ENCODE measurements at regions of chr3 and their contacts with region 1.

Region 1: GRCh38 chr3:114056130-114057010 is at the starts of genes CCDC191 and QTRT2:
- DNase-seq: peak; percentile 100
- H3K4me3 Mint-ChIP-seq: peak within 1 kb of the TSS; percentile 97
- H3K27ac Mint-ChIP-seq: peak within 1 kb of the TSS; percentile 95
- H3K4me1 Mint-ChIP-seq: peaks cover 36% of the 10 kb centered on the region
- H3K27me3 Mint-ChIP-seq: no peaks in the 10 kb centered on the region
- total RNA-seq, gene CCDC191: 1.8 to 2.0 TPM
- total RNA-seq, gene QTRT2: 23.0 to 27.8 TPM

Region 2: GRCh38 chr3:113514265-113514769 is 542.1 kb before region 1 on chr3:
- CTCF ChIA-PET with region 1: no interaction called
- intact Hi-C with region 1: loop called (anchors 1 kb)
- DNase-seq: no peak
- H3K4me3 Mint-ChIP-seq: no peak overlapping the region
- H3K27ac Mint-ChIP-seq: no peak overlapping the region
- H3K4me1 Mint-ChIP-seq: peaks cover 12% of the 10 kb centered on the region
- H3K27me3 Mint-ChIP-seq: peaks cover 12% of the 10 kb centered on the region

Region 3: DNA sequence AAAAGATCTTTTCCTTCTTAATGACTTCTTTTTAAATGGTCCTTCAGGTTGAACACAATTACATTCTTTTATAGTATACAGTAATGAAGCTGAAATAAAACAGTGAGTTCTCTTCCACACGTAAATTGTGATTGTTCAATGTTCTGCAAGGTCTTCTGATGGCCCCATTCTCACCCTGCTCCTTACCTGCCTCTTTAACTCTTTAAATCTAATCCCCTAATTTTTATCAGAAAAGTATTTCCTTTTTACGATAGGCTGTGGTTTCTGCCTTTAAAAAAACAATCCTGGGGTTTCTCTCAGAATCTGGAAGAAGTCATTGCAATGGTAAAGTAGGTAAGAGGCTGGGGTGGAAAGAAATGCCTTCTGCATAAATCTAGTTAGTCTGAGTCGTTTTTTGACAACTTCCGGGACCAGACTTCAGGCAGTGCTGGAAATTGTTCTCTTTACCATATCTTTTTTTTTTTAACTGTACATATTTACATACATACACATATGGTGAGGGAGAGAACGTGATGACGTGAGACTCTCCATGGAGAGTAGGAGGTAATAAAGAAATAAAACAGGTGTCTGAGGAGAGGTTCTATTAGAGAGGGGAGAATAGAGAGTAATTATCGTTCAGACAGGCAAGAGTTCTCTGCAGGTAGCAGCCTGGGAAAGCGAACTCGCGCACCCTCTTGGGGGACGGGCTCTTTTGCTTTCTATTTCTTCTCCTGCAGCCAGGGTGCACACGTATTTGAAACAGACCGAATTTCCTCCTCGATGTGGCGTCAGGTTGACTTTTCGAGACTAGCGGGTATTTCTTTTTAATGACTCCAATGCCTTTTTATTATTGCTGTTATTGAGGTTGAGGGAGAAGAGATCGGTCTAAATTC is 524.3 kb before region 1 on chr3 and contains the start of gene SIDT1:
- CTCF ChIA-PET with region 1: no interaction called
- intact Hi-C with region 1: loop called (anchors 5 kb)
- DNase-seq: peak; percentile 82
- H3K4me3 Mint-ChIP-seq: peak within 1 kb of the TSS; percentile 97
- H3K27ac Mint-ChIP-seq: peak within 1 kb of the TSS; percentile 96
- H3K4me1 Mint-ChIP-seq: peaks cover 46% of the 10 kb centered on the region
- H3K27me3 Mint-ChIP-seq: no peaks in the 10 kb centered on the region
- total RNA-seq, gene SIDT1: 14.6 to 14.9 TPM

Region 4: GRCh38 chr3:113838631-113839209 is 217.7 kb before region 1 on chr3 and contains the start of gene GRAMD1C:
- CTCF ChIA-PET with region 1: no interaction called
- intact Hi-C with region 1: loop called (anchors 1 kb)
- DNase-seq: peak; percentile 89
- H3K4me3 Mint-ChIP-seq: peak within 1 kb of the TSS; percentile 75
- H3K27ac Mint-ChIP-seq: no peak within 1 kb of the TSS
- H3K4me1 Mint-ChIP-seq: peaks cover 6% of the 10 kb centered on the region
- H3K27me3 Mint-ChIP-seq: no peaks in the 10 kb centered on the region
- total RNA-seq, gene GRAMD1C: 0.67 to 1.3 TPM

Region 5: DNA sequence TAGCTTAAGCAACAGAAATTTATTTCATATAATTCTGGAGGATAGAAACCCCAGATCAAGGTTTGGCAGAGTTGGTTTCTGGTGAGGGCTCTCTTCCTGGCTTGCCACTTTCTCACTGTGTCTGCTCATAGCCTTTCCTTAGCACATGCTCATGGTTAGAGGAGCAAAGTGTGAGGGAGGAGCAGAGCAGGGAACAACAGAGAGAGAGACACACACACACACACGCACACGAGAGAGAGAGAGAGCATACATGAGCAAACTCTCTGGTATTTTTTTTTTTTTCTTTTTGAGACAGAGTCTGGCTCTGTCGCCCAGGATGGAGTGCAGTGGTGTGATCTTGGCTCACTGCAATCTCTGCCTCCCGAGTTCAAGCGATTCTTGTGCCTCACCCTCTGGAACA is 145.4 kb before region 1 on chr3:
- CTCF ChIA-PET with region 1: no interaction called
- intact Hi-C with region 1: no loop called
- DNase-seq: no peak
- H3K4me3 Mint-ChIP-seq: no peak overlapping the region
- H3K27ac Mint-ChIP-seq: no peak overlapping the region
- H3K4me1 Mint-ChIP-seq: peaks cover 3% of the 10 kb centered on the region
- H3K27me3 Mint-ChIP-seq: no peaks in the 10 kb centered on the region

Region 6: DNA sequence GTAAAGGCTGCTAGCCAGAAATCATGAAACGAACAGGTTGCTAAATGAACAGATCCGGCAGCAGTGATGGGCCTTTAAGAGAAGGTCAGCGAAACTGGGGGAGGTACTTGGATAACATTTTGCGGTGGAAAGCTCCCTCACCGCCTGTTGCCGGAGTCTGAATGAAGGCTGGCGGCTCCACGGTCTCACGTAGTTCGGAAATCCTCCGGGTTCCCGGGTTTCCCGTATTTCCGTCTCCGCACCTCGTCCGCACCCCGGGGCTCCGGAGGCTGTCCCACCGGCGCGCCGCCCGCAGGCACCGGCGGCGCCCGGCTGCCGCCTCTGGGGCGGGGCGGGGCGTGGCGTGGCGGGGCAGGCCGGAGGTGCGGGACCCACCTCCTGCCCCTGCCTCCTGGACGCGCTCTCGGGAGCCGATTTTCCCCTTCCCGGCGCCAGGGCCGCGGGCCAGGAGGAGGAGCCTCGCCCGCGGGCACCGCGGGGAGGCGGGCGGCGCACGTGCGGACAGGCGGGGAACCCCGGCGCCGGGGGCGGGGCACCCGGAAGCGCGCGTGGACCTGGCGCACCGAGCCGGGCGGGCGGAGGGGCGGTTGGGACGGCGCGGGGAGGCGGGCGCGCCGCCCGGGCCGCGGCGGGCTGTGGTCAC is 108.9 kb before region 1 on chr3 and contains the start of gene ZDHHC23:
- CTCF ChIA-PET with region 1: no interaction called
- intact Hi-C with region 1: loop called (anchors 1 kb)
- DNase-seq: peak; percentile 61
- H3K4me3 Mint-ChIP-seq: peak within 1 kb of the TSS; percentile 68
- H3K27ac Mint-ChIP-seq: no peak within 1 kb of the TSS
- H3K4me1 Mint-ChIP-seq: peaks cover 11% of the 10 kb centered on the region
- H3K27me3 Mint-ChIP-seq: peaks cover 13% of the 10 kb centered on the region
- total RNA-seq, gene ZDHHC23: 5.4 TPM